ENCODE measurements at regions of chr6 and their contacts with region 1.

Region 1: GRCh38 chr6:46011241-46012085 is 4.2 kb downstream of the CLIC5 start:
- DNase-seq: peak; percentile 22 to 82 (median 57)
- ATAC-seq: peak; percentile 88 to 89 (median 88)
- H3K4me3 ChIP-seq: peak overlapping the region in 1 of 2 donors; percentile 30
- H3K4me3 Mint-ChIP-seq: peak overlapping the region; percentile 64 to 71 (median 67)
- H3K27ac ChIP-seq: peak overlapping the region; percentile 87
- H3K27ac Mint-ChIP-seq: peak overlapping the region; percentile 96 to 97
- H3K4me1 ChIP-seq: peaks cover 9 to 52% of the 10 kb centered on the region in 2 experiments
- H3K4me1 Mint-ChIP-seq: peaks cover 54 to 69% (median 60%) of the 10 kb centered on the region in 3 donors
- H3K27me3 ChIP-seq: no peaks in the 10 kb centered on the region
- H3K27me3 Mint-ChIP-seq: peaks cover 0 to 1% of the 10 kb centered on the region in 2 donors

Region 2: GRCh38 chr6:45930420-45931040 is 80.9 kb before region 1 on chr6:
- CTCF ChIA-PET with region 1: interaction called in 1 of 2 experiments, 10 read pairs
- POLR2A ChIA-PET with region 1: no interaction called
- DNase-seq: peak in 34 of 35 experiments; percentile 5 to 70 (median 34)
- ATAC-seq: peak in 2 of 4 experiments; percentile 46 to 63
- H3K4me3 ChIP-seq: no peak overlapping the region
- H3K4me3 Mint-ChIP-seq: no peak overlapping the region
- H3K27ac ChIP-seq: no peak overlapping the region
- H3K27ac Mint-ChIP-seq: peak overlapping the region in 1 of 2 donors; percentile 33
- H3K4me1 ChIP-seq: no peaks in the 10 kb centered on the region
- H3K4me1 Mint-ChIP-seq: peaks cover 0 to 4% (median 0%) of the 10 kb centered on the region in 3 donors
- H3K27me3 ChIP-seq: no peaks in the 10 kb centered on the region
- H3K27me3 Mint-ChIP-seq: no peaks in the 10 kb centered on the region